ENCODE measurements at regions of chr2 and their contacts with region 1.

Region 1: DNA sequence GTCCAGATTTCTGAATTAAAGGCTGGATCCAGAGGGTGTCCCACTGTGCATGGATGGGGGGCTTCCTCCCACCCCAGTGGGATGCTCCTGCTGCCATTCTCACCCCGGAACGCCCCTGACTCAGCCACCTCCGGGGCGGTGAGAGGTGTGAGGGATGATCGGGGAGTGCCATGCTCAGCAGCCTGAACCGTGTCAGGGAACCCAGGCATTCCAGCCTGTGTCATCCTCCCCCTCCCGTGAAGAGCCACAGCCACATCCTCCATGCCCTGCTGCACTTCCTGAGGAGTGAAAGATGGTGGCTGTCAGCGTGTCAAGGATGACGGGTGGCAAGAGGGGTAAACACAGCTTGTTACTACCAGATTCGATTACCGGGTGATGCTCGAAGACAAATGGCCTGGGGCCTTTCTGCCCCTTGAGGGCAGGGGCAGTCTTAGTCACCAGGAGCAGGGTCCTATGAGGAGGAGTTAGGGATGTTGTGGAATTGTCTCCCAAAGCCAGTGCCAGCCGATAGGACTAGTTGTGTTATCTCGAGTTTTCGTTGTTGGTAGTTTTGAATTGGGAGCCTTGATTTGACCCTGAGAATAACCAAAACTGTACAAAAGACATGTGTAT is 80.8 kb downstream of the TCF7L1 start:
- DNase-seq: no peak
- ATAC-seq: peak; percentile 25 to 55
- H3K4me3 ChIP-seq: peak overlapping the region in 2 of 4 donors; percentile 27 to 29
- H3K27ac ChIP-seq: peak overlapping the region; percentile 68 to 79 (median 76)
- H3K4me1 ChIP-seq: peaks cover 43 to 47% of the 10 kb centered on the region in 2 donors
- H3K27me3 ChIP-seq: no peaks in the 10 kb centered on the region
- CTCF ChIP-seq: no peak
- POLR2A ChIP-seq: no peak

Region 2: GRCh38 chr2:85175369-85176299 is 38.4 kb before region 1 on chr2:
- in situ Hi-C with region 1: no loop called
- intact Hi-C with region 1: loop called (anchors 5 kb)
- DNase-seq: peak; percentile 77 to 82
- ATAC-seq: peak; percentile 79 to 84
- H3K4me3 ChIP-seq: peak overlapping the region in 3 of 4 donors; percentile 10 to 29 (median 18)
- H3K27ac ChIP-seq: peak overlapping the region; percentile 90 to 96 (median 92)
- H3K4me1 ChIP-seq: peaks cover 57 to 70% of the 10 kb centered on the region in 2 donors
- H3K27me3 ChIP-seq: no peaks in the 10 kb centered on the region
- CTCF ChIP-seq: no peak
- POLR2A ChIP-seq: peak in 1 of 2 donors; percentile 29